Left ventricle myocardium superior (tissue), 1 donor: ENCODE measurements at regions of chr13 and their contacts with region 1.

Region 1: GRCh38 chr13:51583875-51584730 is at the start of gene WDFY2:
- DNase-seq: peak; percentile 100
- ATAC-seq: peak; percentile 95
- total RNA-seq, gene WDFY2: 4.9 TPM

Region 2: GRCh38 chr13:51342706-51343105 is 241.4 kb before region 1 on chr13:
- intact Hi-C with region 1: no loop called
- DNase-seq: no peak
- ATAC-seq: no peak

Region 3: DNA sequence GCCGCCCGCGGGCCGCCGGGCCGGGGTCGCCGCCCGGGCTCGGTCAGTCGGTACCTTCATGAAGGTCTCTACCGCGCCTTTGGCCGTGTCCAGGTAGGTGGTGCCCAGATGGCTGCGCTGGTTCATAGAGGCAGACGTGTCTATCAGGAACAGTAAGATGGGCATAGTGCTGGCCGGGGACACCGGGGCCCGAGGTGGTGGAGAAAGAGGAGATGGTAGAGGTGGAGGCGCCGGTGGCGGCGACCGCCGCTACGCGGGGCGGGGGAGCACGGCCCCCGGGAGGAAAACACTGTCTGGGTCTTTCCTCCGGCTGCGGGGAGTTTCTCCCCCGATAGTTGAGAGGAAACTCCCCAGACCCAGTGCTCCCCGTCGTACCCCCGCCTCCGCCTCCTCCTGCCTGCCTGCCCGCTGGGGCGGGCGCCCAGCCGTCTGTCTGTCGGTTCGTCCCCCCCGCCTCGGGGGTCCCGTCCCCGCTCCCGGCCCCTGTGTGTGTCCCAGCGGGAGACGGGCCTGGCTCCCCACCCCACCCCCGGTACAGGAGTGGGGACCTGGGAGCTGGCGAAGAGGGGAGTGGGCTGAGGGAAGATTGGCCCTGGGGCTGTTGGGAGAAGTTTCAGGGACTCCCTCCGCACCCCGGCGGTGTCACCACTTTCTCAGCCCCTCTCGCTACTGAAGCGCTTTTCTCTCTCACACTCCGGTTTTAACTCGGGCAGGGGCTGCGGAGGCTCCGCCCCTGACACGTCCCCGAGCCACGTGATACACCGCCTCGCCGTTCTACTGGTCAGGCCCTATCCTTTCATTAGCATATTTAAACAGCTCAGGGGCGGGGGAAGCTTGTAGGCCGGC is 131.5 kb before region 1 on chr13 and contains the start of gene INTS6:
- intact Hi-C with region 1: loop called (anchors 10 kb)
- DNase-seq: peak; percentile 99
- ATAC-seq: peak; percentile 90
- total RNA-seq, gene INTS6: 23.5 TPM

Region 4: GRCh38 chr13:51803422-51804294 is 219.6 kb after region 1 on chr13 and contains the start of gene DHRS12:
- intact Hi-C with region 1: no loop called
- DNase-seq: peak; percentile 96
- ATAC-seq: peak; percentile 88
- total RNA-seq, gene DHRS12: 11.6 TPM